ENCODE measurements at regions of chr19 and their contacts with region 1.

Region 1: GRCh38 chr19:49937750-49938381 is 8.6 kb upstream of the NUP62 start:
- DNase-seq: peak; percentile 51 to 73
- H3K4me3 ChIP-seq: peak overlapping the region; percentile 9; the same call in 1 of the 2 replicates
- H3K27ac ChIP-seq: no peak overlapping the region
- H3K4me1 ChIP-seq: peaks cover 13% of the 10 kb centered on the region
- H3K27me3 ChIP-seq: no peaks in the 10 kb centered on the region
- CTCF ChIP-seq: peak; percentile 99

Region 2: DNA sequence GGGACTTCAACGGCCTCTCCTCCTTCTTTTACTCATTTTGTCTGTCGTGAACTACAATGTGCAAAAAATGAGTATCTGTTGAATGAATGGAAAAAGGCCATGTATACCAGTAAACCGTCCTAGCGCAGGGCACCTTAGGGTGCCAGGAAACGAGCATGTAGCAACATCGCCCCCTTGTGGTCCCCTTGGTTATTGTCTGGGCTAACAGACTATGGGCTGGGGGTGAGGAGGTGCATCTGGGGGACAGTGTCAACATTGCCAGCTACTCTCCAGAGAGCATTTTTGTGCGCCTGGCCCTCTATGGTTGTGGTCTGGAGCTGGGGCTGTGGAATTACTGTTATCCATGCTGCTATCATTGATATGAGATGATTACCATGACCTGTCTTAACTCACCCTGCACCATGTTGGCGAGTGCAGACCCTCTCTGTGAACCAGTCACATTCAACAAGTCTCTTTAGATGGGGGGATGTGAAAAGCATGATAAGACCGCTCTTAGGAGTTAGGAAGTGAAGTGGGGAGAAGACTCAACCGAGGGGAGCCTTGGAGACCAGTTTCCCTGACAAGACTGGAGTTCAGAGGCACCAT is 45.9 kb after region 1 on chr19:
- CTCF ChIA-PET with region 1: no interaction called
- POLR2A ChIA-PET with region 1: no interaction called
- intact Hi-C with region 1: loop called (anchors 1 kb)
- DNase-seq: peak; percentile 46 to 52
- H3K4me3 ChIP-seq: no peak overlapping the region
- H3K27ac ChIP-seq: no peak overlapping the region
- H3K4me1 ChIP-seq: no peaks in the 10 kb centered on the region
- H3K27me3 ChIP-seq: no peaks in the 10 kb centered on the region
- CTCF ChIP-seq: peak; percentile 98

Region 3: GRCh38 chr19:49997709-49998108 is 59.8 kb after region 1 on chr19:
- CTCF ChIA-PET with region 1: no interaction called
- POLR2A ChIA-PET with region 1: no interaction called
- intact Hi-C with region 1: no loop called
- DNase-seq: no peak
- H3K4me3 ChIP-seq: no peak overlapping the region
- H3K27ac ChIP-seq: no peak overlapping the region
- H3K4me1 ChIP-seq: no peaks in the 10 kb centered on the region
- H3K27me3 ChIP-seq: no peaks in the 10 kb centered on the region
- CTCF ChIP-seq: no peak